Dendritic cell treated with granulocyte-macrophage colony-stimulating factor and Interleukin-4, amounts not matched to agents 40 ng/mL and 50 ng/mL, for 4 days (primary cell): ENCODE measurements at regions of chr13 and their contacts with region 1.

Region 1: DNA sequence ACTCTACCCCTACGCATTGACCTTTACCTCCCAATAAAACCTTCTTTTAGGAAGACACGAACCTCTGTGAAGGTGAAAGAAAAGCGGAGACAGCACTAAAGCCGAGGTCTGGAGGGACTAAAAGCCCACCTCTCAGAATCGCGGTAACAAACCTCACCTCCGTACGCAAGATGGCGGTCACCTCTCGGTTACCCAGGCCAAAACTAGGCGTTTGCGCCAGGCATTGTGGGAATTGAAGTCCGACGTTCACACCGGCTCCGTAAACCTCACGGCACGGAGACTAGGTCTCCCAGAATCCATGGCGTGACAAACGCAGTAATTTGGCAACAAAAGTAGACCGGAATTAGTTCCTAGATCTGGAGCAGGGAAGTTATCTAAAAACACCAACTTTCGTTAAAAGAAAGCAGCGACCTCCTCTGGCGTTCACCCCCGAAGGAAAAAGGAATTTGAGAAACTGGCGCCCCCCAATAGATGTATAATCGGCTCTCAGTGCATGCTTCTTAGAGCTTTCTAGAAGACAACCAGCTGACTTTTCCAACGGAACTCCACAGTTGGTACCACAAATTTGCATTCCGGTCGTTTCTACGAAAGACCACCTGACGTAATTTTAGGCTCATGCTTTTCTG is at the start of gene N4BP2L2:
- H3K4me3 Mint-ChIP-seq: peak within 1 kb of the TSS; percentile 94
- H3K27ac Mint-ChIP-seq: peak within 1 kb of the TSS; percentile 98
- H3K4me1 Mint-ChIP-seq: peaks cover 40% of the 10 kb centered on the region
- H3K27me3 Mint-ChIP-seq: no peaks in the 10 kb centered on the region

Region 2: GRCh38 chr13:32427852-32428580 is 110.7 kb before region 1 on chr13 and contains the start of gene N4BP2L1:
- intact Hi-C with region 1: loop called (anchors 5 kb)
- H3K4me3 Mint-ChIP-seq: peak within 1 kb of the TSS; percentile 91
- H3K27ac Mint-ChIP-seq: peak within 1 kb of the TSS; percentile 100
- H3K4me1 Mint-ChIP-seq: peaks cover 64% of the 10 kb centered on the region
- H3K27me3 Mint-ChIP-seq: no peaks in the 10 kb centered on the region

Region 3: DNA sequence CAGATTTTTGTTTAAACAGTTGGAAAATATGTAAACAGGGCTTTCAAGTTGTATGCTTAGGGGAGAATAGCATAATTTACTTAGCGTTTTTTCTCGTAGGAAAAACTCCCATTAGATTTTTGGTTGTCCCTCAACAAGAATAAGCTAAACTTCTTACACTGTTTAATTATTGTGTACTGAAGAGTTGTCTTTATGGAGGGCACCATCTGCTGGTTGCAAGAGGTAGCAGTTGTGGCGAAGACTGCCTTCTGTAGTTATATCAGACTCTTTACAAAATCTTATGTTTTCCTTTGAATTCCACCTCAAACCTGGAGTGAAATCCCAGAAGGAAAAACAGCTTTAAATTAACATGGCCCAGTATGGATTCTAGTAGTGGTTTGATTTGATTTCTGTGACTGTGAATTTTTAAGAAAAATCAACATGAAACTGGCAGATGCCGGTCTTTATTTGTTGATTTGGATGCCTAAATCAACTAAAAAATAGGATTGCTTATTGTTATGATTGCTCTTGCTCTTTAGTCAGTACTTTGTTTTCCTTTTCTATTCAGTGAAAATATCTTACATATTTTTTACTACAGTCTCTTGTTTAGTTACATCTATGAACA is 100.9 kb after region 1 on chr13:
- intact Hi-C with region 1: loop called (anchors 5 kb)
- H3K4me3 Mint-ChIP-seq: no peak overlapping the region
- H3K27ac Mint-ChIP-seq: no peak overlapping the region
- H3K4me1 Mint-ChIP-seq: peaks cover 23% of the 10 kb centered on the region
- H3K27me3 Mint-ChIP-seq: no peaks in the 10 kb centered on the region